ENCODE measurements at regions of chr11 and their contacts with region 1.

Region 1: DNA sequence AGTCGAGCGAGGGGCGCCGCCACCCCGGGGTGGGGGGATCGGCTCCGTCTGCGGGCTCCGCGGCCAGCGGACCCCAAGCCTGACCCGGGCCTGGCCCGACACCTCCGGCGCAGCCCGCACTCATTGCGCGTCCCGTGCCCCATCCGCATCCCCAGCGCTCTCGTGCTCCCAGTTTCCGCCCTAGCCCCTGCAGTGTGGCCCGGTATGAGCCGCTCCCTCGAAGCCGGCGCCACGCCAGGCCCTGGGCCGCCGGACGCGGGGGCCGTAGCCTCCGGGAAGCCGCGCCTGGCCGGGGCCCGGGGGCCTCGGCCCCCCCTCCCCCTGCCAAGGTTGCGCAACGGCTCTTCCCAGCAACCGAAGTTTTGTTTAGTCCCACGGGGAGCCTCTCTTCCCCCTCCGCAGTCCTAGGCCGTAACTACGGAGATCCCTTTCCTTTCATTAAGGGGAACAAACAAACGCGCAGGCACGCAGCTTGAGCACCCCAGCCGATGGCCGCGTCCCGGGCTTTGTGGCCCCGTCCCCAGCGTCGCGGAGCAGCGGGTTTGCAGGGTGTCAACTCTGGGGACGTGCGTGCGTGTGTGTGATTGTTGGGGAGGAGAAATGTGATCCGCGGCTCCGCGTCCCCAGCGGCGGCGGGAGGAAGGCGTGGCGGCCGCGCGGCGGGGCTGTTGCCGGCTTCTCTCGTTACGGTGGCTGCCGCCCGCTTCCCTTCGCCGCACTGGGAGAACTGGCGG is 883 bp downstream of the HIPK3 start:
- DNase-seq: peak; percentile 85
- H3K4me3 ChIP-seq: peak overlapping the region; percentile 64 to 95
- H3K27ac ChIP-seq: peak overlapping the region; percentile 99 to 100
- H3K4me1 ChIP-seq: no peaks in the 10 kb centered on the region
- H3K27me3 ChIP-seq: no peaks in the 10 kb centered on the region
- CTCF ChIP-seq: peak in 3 of 4 experiments; percentile 14 to 51 (median 48)
- POLR2A ChIP-seq: peak; percentile 60

Region 2: DNA sequence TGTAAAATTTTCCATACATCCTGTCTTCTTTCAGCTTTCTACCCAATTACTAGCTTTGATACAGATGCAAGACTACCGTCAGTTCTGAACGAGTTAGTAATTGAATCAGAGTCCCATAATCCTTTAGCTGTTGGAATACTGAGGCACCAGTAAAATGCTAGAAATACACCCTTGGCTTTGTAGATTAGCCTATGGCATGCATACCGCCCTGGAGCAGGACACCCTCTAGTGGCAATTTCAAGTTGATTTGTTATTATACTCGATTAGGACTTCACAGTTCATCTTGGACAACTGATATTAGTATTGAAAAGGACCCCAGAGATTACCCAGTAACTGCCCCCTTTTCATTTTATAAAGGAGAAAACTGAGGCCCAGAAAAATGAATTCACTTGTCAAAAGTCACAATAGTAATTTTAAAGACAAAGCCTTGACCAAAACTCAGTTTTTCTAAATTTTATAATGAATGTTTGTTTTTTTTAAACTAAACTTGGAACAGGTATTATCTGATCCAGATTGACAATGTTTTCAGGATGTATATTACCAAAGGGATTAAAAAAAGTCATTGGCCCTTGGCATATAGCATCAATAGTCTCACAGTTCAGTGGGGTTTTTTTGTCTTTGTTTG is 71.8 kb after region 1 on chr11:
- intact Hi-C with region 1: loop called (anchors 5 kb)
- DNase-seq: peak; percentile 45
- H3K4me3 ChIP-seq: no peak overlapping the region
- H3K27ac ChIP-seq: no peak overlapping the region
- H3K4me1 ChIP-seq: no peaks in the 10 kb centered on the region
- H3K27me3 ChIP-seq: no peaks in the 10 kb centered on the region
- CTCF ChIP-seq: peak in 3 of 4 experiments; percentile 57 to 66 (median 58)
- POLR2A ChIP-seq: no peak

Region 3: GRCh38 chr11:33736148-33736809 is 478.2 kb after region 1 on chr11 and contains the start of gene CD59:
- intact Hi-C with region 1: loop called (anchors 10 kb)
- DNase-seq: peak; percentile 96
- H3K4me3 ChIP-seq: peak within 1 kb of the TSS; percentile 68 to 81
- H3K27ac ChIP-seq: peak within 1 kb of the TSS; percentile 88 to 91
- H3K4me1 ChIP-seq: no peaks in the 10 kb centered on the region
- H3K27me3 ChIP-seq: no peaks in the 10 kb centered on the region
- CTCF ChIP-seq: peak in 1 of 4 experiments; percentile 9
- POLR2A ChIP-seq: peak; percentile 97
- total RNA-seq, gene CD59: 205 to 274 TPM